B cell (primary cell): ENCODE measurements at regions of chr12 and their contacts with region 1.

Region 1: DNA sequence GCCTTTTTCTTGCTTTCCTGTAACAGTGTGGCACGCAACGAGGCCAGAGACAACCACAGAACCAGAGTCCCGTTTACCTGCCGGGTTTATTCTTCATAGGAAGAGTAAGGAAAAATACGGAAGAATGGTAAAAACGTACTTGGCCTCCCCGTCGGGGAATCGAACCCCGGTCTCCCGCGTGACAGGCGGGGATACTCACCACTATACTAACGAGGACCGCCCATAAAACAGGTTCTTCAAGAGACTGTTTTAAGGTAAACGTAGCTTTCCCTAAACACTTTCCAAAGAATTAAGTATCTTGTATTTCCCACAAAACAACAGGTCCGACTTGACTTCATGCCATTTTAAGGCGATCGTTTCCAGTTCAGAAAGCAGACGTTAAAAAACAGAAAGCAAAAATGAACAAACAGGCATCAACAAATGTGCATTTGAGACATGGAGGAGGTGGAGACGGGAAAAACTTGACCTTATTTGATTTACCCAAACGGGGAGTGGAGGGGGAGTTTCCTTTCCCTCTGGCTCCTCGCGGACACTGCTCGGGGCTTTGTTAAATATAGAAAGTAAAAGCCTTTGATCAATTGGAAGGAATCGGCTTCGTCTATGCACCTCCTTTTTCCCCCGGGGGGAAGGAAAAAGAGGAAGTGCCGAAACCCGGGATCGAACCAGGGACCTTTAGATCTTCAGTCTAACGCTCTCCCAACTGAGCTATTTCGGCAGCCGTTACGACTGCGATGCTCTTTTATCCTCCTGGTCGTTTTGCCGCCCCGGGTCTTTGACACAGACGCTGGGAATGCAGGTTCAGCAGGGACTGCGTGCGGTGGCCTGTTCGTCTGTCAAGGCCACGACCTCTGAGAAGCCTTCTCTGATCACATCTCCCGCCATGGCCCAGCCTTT is 13.0 kb upstream of the UBC start:
- DNase-seq: peak; percentile 94
- ATAC-seq: peak; percentile 88
- H3K4me3 ChIP-seq: peak overlapping the region; percentile 69 to 91 (median 77)
- H3K4me3 Mint-ChIP-seq: peak overlapping the region; percentile 93
- H3K27ac ChIP-seq: peak overlapping the region; percentile 43 to 50
- H3K27ac Mint-ChIP-seq: peak overlapping the region; percentile 99
- H3K4me1 ChIP-seq: peaks cover 16 to 24% of the 10 kb centered on the region in 2 donors
- H3K4me1 Mint-ChIP-seq: peaks cover 29% of the 10 kb centered on the region
- H3K27me3 ChIP-seq: no peaks in the 10 kb centered on the region
- H3K27me3 Mint-ChIP-seq: no peaks in the 10 kb centered on the region
- CTCF ChIP-seq: no peak

Region 2: GRCh38 chr12:124917135-124917840 is 10.2 kb before region 1 on chr12:
- CTCF ChIA-PET with region 1: interaction called, 57 read pairs
- POLR2A ChIA-PET with region 1: interaction called, 74 read pairs
- intact Hi-C with region 1: loop called (anchors 1 kb)
- DNase-seq: peak; percentile 97
- ATAC-seq: peak; percentile 59
- H3K4me3 ChIP-seq: peak overlapping the region; percentile 36 to 73 (median 51)
- H3K4me3 Mint-ChIP-seq: peak overlapping the region; percentile 88
- H3K27ac ChIP-seq: peak overlapping the region; percentile 93 to 95
- H3K27ac Mint-ChIP-seq: peak overlapping the region; percentile 97
- H3K4me1 ChIP-seq: peaks cover 74 to 80% of the 10 kb centered on the region in 2 donors
- H3K4me1 Mint-ChIP-seq: peaks cover 88% of the 10 kb centered on the region
- H3K27me3 ChIP-seq: no peaks in the 10 kb centered on the region
- H3K27me3 Mint-ChIP-seq: no peaks in the 10 kb centered on the region
- CTCF ChIP-seq: no peak

Region 3: DNA sequence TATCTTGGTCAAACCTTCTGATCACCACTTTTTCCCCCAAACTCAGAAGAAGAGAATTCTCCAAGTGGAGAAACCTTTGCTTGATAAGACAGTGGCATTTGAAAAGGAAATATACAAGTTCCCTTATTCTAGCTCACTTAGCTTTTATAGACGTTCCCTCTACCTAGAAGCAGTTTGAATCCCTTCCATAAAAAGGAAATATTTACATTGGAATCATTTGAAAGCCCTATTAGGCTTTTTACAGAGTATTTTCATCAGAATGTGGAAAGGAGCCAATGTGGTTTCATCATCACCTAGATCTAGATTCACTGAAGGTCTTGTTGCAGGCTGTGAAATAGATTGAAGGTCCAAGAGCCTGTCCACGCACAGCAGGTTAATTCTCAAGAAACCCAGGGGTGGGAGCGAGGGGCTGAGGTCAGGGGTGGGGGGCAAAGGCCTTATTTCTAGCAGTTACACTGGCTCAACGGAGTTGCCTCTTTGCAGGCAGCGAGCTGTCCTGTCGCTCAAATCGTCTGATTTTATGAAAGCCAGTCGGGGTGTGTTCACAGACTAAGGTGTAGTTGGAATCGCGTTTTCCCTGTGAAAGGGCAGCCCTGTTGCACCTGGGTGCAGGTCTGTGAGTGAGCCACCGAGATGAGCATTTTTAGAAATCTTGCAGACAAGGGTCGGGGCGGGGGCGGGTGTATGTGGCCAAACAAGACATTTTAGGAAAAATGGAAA is 183.4 kb after region 1 on chr12:
- CTCF ChIA-PET with region 1: no interaction called
- POLR2A ChIA-PET with region 1: no interaction called
- intact Hi-C with region 1: no loop called
- DNase-seq: no peak
- ATAC-seq: no peak
- H3K4me3 ChIP-seq: no peak overlapping the region
- H3K4me3 Mint-ChIP-seq: no peak overlapping the region
- H3K27ac ChIP-seq: no peak overlapping the region
- H3K27ac Mint-ChIP-seq: no peak overlapping the region
- H3K4me1 ChIP-seq: no peaks in the 10 kb centered on the region
- H3K4me1 Mint-ChIP-seq: no peaks in the 10 kb centered on the region
- H3K27me3 ChIP-seq: no peaks in the 10 kb centered on the region
- H3K27me3 Mint-ChIP-seq: no peaks in the 10 kb centered on the region
- CTCF ChIP-seq: no peak